ENCODE measurements at regions of chr2 and their contacts with region 1.

Region 1: GRCh38 chr2:173590271-173590861 is 235.7 kb downstream of the CDCA7 start:
- DNase-seq: peak; percentile 87 to 94
- H3K4me3 ChIP-seq: peak overlapping the region; percentile 41; the same call in 1 of the 2 replicates
- H3K27ac ChIP-seq: peak overlapping the region; percentile 72
- H3K4me1 ChIP-seq: peaks cover 32% of the 10 kb centered on the region
- H3K27me3 ChIP-seq: no peaks in the 10 kb centered on the region
- CTCF ChIP-seq: no peak

Region 2: GRCh38 chr2:173652767-173653431 is 62.5 kb after region 1 on chr2:
- CTCF ChIA-PET with region 1: no interaction called
- POLR2A ChIA-PET with region 1: no interaction called
- intact Hi-C with region 1: loop called (anchors 1 kb)
- DNase-seq: peak; percentile 87 to 97
- H3K4me3 ChIP-seq: no peak overlapping the region
- H3K27ac ChIP-seq: peak overlapping the region; percentile 86
- H3K4me1 ChIP-seq: peaks cover 18% of the 10 kb centered on the region
- H3K27me3 ChIP-seq: no peaks in the 10 kb centered on the region
- CTCF ChIP-seq: no peak

Measured in PC-9 (cell line).